MCF 10A (cell line): ENCODE measurements at regions of chr5 and their contacts with region 1.

Region 1: DNA sequence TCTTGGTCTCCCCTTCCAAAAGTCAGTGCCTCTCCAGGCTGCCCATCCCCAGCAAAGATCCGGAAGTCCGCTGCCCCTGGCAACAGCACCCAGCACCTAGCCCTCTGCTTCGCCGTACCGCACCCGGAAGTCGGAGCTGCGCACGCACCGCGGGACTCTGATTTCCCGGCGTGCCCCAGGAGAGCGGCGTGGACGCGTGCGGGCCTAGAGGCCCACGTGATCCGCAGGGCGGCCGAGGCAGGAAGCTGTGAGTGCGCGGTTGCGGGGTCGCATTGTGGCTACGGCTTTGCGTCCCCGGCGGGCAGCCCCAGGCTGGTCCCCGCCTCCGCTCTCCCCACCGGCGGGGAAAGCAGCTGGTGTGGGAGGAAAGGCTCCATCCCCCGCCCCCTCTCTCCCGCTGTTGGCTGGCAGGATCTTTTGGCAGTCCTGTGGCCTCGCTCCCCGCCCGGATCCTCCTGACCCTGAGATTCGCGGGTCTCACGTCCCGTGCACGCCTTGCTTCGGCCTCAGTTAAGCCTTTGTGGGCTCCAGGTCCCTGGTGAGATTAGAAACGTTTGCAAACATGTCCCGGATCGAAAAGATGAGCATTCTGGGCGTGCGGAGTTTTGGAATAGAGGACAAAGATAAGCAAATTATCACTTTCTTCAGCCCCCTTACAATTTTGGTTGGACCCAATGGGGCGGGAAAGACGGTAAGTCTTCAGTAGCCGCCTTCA is at the start of gene RAD50:
- DNase-seq: peak; percentile 97
- H3K4me3 Mint-ChIP-seq: peak within 1 kb of the TSS; percentile 97
- H3K27ac Mint-ChIP-seq: peak within 1 kb of the TSS; percentile 99
- H3K4me1 Mint-ChIP-seq: peaks cover 16% of the 10 kb centered on the region
- H3K27me3 Mint-ChIP-seq: no peaks in the 10 kb centered on the region
- CTCF ChIP-seq: no peak
- total RNA-seq, gene RAD50: 145 TPM in 2 replicates

Region 2: DNA sequence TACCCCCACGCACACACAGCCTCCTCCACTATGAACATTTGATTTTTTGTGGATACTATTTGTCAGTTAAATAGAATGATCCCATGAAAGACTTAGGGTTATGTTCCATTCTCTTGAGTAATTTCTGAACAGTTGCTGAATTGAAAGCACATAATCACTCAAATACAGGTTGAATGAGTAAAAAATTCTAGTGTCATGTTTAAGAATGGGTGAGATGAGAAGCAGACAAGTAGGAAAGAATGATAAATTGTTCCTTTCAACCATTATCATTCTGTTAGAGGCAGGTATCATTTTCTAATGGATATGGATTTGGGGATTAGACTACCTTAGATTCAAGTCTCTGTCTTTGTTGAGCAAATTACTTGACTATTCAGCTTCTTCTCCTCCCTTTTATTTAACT is 19.2 kb after region 1 on chr5:
- CTCF ChIA-PET with region 1: no interaction called
- POLR2A ChIA-PET with region 1: interaction called, 17 read pairs
- intact Hi-C with region 1: no loop called
- DNase-seq: no peak
- H3K4me3 Mint-ChIP-seq: no peak overlapping the region
- H3K27ac Mint-ChIP-seq: no peak overlapping the region
- H3K4me1 Mint-ChIP-seq: peaks cover 7% of the 10 kb centered on the region
- H3K27me3 Mint-ChIP-seq: no peaks in the 10 kb centered on the region
- CTCF ChIP-seq: no peak